Body of pancreas (tissue), 4 donors: ENCODE measurements at regions of chr16 and their contacts with region 1.

Region 1: GRCh38 chr16:68264128-68265077 is at the start of gene SLC7A6:
- DNase-seq: peak; percentile 65 to 77 (median 68)
- ATAC-seq: peak; percentile 83
- H3K4me3 ChIP-seq: peak within 1 kb of the TSS; percentile 34 to 64
- H3K27ac ChIP-seq: peak within 1 kb of the TSS; percentile 59 to 84 (median 72)
- H3K4me1 ChIP-seq: peaks cover 17% of the 10 kb centered on the region
- H3K27me3 ChIP-seq: no peaks in the 10 kb centered on the region
- CTCF ChIP-seq: peak; percentile 45 to 70 (median 61)
- POLR2A ChIP-seq: peak in 2 of 3 donors; percentile 8 to 24
- total RNA-seq, gene SLC7A6: 10.9 to 23.4 TPM

Region 2: DNA sequence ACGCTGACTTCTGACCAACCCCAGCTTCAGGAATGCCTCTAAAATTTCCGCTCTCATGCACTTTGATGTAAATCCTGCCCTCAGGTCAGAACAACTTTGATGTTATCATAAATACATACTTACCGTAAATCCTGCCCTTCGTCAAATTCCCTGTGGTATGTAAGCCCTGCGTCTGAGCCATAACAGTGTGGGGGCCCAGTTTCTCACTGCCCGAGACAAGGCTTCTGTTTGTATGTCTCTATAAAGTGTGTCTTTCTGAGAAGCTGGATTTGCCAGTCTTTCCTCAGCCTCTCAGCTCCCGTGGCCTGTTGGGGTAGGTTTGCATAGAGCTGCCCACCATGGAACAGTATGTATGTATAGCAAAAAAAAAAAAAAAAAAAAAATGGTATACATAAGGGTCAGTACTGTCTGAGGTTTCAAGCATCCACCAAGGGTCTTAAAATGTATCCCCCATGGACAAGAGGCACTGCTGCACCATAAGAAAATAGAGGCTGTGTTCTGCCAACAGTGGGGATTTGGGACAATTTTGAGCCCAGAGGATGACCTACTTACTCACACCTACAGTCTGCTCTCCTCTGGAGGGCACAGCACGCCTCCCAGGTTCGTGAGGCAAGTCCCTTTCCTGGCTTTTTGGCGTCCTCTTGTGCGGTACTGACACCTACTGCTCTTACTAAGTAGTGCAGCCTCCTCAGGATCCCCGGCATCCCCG is 63.9 kb after region 1 on chr16:
- intact Hi-C with region 1: loop called (anchors 5 kb)
- DNase-seq: peak; percentile 80 to 84 (median 82)
- ATAC-seq: peak; percentile 97
- H3K4me3 ChIP-seq: no peak overlapping the region
- H3K27ac ChIP-seq: no peak overlapping the region
- H3K4me1 ChIP-seq: no peaks in the 10 kb centered on the region
- H3K27me3 ChIP-seq: no peaks in the 10 kb centered on the region
- CTCF ChIP-seq: peak; percentile 76 to 96 (median 93)
- POLR2A ChIP-seq: no peak

Region 3: GRCh38 chr16:69535123-69536050 is 1271.0 kb after region 1 on chr16:
- intact Hi-C with region 1: no loop called
- DNase-seq: no peak
- ATAC-seq: no peak
- H3K4me3 ChIP-seq: no peak overlapping the region
- H3K27ac ChIP-seq: no peak overlapping the region
- H3K4me1 ChIP-seq: peaks cover 16% of the 10 kb centered on the region
- H3K27me3 ChIP-seq: no peaks in the 10 kb centered on the region
- CTCF ChIP-seq: no peak
- POLR2A ChIP-seq: no peak